Ascending aorta (tissue), 2 donors: ENCODE measurements at regions of chr6 and their contacts with region 1.

Region 1: GRCh38 chr6:153231048-153231646 is 100.1 kb upstream of the RGS17 start:
- DNase-seq: peak in 1 of 2 donors; percentile 78
- H3K4me3 ChIP-seq: no peak overlapping the region
- H3K27ac ChIP-seq: no peak overlapping the region
- H3K4me1 ChIP-seq: no peaks in the 10 kb centered on the region
- H3K27me3 ChIP-seq: no peaks in the 10 kb centered on the region
- CTCF ChIP-seq: peak; percentile 74 to 88 (median 83)

Region 2: GRCh38 chr6:153947808-153948447 is 716.8 kb after region 1 on chr6:
- intact Hi-C with region 1: loop called (anchors 2 kb)
- DNase-seq: peak in 1 of 2 donors; percentile 65
- H3K4me3 ChIP-seq: peak overlapping the region in 1 of 2 donors; percentile 11
- H3K27ac ChIP-seq: no peak overlapping the region
- H3K4me1 ChIP-seq: no peaks in the 10 kb centered on the region
- H3K27me3 ChIP-seq: no peaks in the 10 kb centered on the region
- CTCF ChIP-seq: peak; percentile 61 to 95 (median 90)

Region 3: DNA sequence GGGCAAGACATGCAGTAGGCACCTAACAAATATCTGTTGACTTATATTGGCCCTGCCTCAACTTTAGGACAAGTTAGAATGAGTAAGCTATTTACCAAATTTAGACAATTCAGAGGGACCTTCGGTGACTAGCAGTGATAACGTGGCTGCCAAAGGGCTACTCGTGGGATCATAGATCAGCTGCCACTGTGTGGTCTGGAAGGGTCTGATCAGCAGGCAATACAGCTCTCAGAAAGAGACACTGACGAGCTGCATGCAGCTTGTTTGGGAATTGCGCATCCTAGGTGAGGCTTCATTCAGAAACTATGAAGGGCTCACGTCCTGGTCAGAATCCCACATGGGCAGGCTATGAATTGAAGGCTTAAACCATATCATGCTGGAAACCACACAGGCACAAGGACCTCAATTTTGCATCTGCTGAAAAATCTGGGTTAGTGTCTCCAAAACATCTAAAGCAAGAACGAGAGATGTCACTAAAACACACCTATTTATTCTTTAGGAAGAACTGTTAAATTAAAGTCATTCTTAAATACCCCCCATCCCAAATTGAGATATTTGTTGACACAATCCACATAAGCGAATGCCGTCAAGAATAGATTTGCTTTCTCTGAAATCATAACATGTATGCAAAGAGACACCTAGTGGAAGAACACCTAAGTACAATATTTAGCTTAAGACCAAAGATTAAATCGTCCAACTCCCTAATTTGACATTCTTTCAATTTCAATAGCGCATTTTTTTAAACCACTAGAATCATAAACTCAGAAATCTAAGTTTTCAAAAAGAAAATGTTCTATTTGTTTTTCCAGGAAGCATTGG is 1045.9 kb after region 1 on chr6:
- intact Hi-C with region 1: loop called (anchors 5 kb)
- DNase-seq: no peak
- H3K4me3 ChIP-seq: peak overlapping the region in 1 of 2 donors; percentile 44
- H3K27ac ChIP-seq: no peak overlapping the region
- H3K4me1 ChIP-seq: peaks cover 0 to 2% of the 10 kb centered on the region in 2 donors
- H3K27me3 ChIP-seq: no peaks in the 10 kb centered on the region
- CTCF ChIP-seq: peak; percentile 33 to 65 (median 43)